ENCODE measurements at regions of chr2 and their contacts with region 1.

Region 1: GRCh38 chr2:160109936-160110673 is 47.7 kb upstream of the PLA2R1 start:
- DNase-seq: peak; percentile 66 to 86 (median 77)
- ATAC-seq: peak; percentile 91 to 92
- H3K4me3 ChIP-seq: no peak overlapping the region
- H3K27ac ChIP-seq: no peak overlapping the region
- H3K4me1 ChIP-seq: no peaks in the 10 kb centered on the region
- H3K27me3 ChIP-seq: no peaks in the 10 kb centered on the region

Region 2: GRCh38 chr2:159797543-159798375 is 312.3 kb before region 1 on chr2 and contains the start of gene CD302:
- intact Hi-C with region 1: no loop called
- DNase-seq: peak; percentile 85 to 94 (median 92)
- ATAC-seq: peak; percentile 90 to 94
- H3K4me3 ChIP-seq: peak within 1 kb of the TSS; percentile 44
- H3K27ac ChIP-seq: peak within 1 kb of the TSS; percentile 69
- H3K4me1 ChIP-seq: no peaks in the 10 kb centered on the region
- H3K27me3 ChIP-seq: no peaks in the 10 kb centered on the region
- total RNA-seq, gene CD302: 26.4 to 33.7 (median 30.1) TPM

Region 3: DNA sequence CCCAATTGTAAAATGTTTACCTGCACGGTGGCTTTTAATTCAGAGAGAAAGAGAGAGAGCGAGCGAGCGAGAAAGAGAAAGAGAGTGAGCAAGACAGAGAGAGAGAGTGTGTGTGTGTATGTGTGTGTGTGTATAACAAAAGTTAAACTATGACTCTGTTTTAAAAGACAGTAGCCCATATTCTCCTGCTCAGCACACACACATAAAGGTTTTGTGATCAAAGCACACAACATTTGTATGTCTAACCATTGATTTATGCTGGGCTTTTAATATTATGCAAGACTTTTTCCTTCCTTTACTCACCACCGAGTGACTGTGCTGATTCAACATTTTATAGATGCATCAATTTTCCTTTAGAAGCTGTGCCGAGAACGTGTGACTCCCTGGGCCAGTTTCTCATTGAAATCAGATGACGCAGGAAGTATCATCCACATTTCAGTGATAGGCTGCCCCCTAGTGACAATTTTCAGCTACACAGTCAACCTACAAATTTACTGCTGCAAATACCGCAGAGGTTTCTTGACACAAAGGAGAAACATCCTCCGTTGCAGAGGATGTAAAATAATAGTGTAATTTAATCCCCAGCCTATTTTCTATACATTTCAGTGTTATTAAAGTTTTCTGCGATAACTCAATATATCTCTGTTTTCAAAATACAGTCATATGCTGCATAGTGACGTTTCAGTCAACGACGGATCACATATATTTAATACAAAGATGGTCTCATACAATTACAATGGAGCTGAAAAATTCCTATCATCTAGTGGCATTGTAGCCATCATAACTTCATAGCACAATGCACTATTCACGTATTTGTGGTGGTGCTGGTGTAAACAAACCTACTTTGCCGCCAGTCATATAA is 884.3 kb after region 1 on chr2:
- intact Hi-C with region 1: loop called in 3 of 4 experiments (anchors 5 to 10 kb)
- DNase-seq: peak in 2 of 3 donors; percentile 46 to 52
- ATAC-seq: peak; percentile 82 to 90
- H3K4me3 ChIP-seq: no peak overlapping the region
- H3K27ac ChIP-seq: peak overlapping the region; percentile 56
- H3K4me1 ChIP-seq: no peaks in the 10 kb centered on the region
- H3K27me3 ChIP-seq: no peaks in the 10 kb centered on the region

Region 4: GRCh38 chr2:161004379-161004778 is 894.3 kb after region 1 on chr2:
- intact Hi-C with region 1: loop called in 3 of 4 experiments (anchors 10 kb)
- DNase-seq: no peak
- ATAC-seq: no peak
- H3K4me3 ChIP-seq: no peak overlapping the region
- H3K27ac ChIP-seq: no peak overlapping the region
- H3K4me1 ChIP-seq: no peaks in the 10 kb centered on the region
- H3K27me3 ChIP-seq: no peaks in the 10 kb centered on the region